Heart right ventricle (tissue), 16 donors: ENCODE measurements at regions of chr11 and their contacts with region 1.

Region 1: GRCh38 chr11:36564376-36565030 is 3.3 kb upstream of the RAG1 start:
- DNase-seq: peak in 1 of 2 donors; percentile 49
- ATAC-seq: peak; percentile 55 to 86 (median 75)
- H3K4me3 ChIP-seq: peak overlapping the region in 9 of 10 donors; percentile 22 to 46 (median 41)
- H3K27ac ChIP-seq: no peak overlapping the region
- H3K4me1 ChIP-seq: peaks cover 0 to 5% (median 0%) of the 10 kb centered on the region in 9 donors
- H3K27me3 ChIP-seq: peaks cover 0 to 5% (median 0%) of the 10 kb centered on the region in 7 donors
- CTCF ChIP-seq: peak; percentile 38 to 81 (median 72)

Region 2: DNA sequence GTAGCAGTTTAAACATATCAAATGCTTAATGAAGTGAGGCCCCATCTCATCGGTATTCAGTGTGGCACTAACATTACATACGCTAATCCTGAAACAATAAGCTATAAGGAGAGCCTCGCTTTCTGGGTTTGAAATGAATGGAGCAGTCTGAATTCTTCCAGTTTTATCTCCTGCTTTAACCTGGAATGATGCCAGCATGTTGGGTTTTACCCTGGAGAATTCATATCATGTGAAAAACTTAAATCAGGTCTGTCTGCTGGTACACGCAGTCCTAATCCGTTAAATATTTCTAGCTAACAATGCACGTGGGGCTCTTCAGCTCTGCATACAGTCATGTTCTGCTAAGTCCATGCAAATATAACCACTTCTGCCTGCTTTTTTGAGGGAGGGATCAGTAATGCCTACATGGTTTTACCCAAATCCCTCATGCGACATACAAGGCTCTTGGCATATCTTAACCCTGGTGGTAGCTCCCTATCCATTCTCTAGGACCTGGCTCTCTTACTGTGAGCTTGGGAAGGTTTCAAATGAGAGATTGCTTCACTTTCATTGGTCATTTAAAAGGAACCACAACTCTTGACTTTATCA is 368.0 kb before region 1 on chr11:
- intact Hi-C with region 1: no loop called
- DNase-seq: peak in 1 of 2 donors; percentile 7
- ATAC-seq: peak in 5 of 8 donors; percentile 46 to 85 (median 67)
- H3K4me3 ChIP-seq: peak overlapping the region in 2 of 10 donors; percentile 4 to 5
- H3K27ac ChIP-seq: peak overlapping the region in 4 of 10 donors; percentile 20 to 48 (median 36)
- H3K4me1 ChIP-seq: peaks cover 0 to 26% (median 7%) of the 10 kb centered on the region in 9 donors
- H3K27me3 ChIP-seq: no peaks in the 10 kb centered on the region
- CTCF ChIP-seq: no peak

Region 3: DNA sequence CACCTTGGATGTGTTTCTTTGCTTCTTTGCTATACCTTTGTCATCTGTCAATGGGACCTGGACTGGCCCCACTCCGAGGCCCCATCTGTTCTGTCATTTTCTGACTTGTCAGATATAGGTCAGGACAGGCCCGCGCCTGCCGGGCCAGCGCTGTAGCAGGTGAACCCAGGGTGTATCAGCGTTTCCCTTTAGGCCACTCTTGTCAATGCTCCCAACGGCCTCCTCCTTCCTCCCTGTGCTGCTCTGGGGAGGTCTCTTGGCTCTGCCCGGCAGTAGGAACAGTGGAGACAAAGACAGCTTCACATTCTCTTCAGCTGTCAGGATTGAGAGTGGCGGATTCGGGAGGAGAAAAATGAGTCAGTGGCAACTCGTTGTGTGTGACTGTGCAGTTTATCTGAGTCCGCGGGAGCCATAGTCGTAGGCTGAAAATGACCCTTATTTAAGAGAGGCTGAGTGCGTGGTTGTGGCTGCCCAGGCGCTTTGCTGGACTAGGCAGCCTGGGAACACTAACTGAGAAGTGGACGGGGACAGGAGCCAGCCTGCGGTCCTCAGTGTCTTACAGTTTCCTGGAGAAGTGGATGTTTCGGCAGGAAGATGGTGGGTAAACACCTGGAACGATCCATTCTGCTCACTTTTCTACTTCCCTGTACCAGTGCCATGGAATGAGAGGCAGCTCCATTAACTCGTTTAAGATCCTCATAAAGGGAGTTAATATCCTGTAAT is 166.1 kb before region 1 on chr11:
- intact Hi-C with region 1: no loop called
- DNase-seq: no peak
- ATAC-seq: no peak
- H3K4me3 ChIP-seq: no peak overlapping the region
- H3K27ac ChIP-seq: peak overlapping the region in 1 of 10 donors; percentile 10
- H3K4me1 ChIP-seq: peaks cover 0 to 33% (median 13%) of the 10 kb centered on the region in 9 donors
- H3K27me3 ChIP-seq: no peaks in the 10 kb centered on the region
- CTCF ChIP-seq: no peak

Region 4: GRCh38 chr11:36417154-36417553 is 147.3 kb before region 1 on chr11:
- intact Hi-C with region 1: no loop called
- DNase-seq: no peak
- ATAC-seq: no peak
- H3K4me3 ChIP-seq: no peak overlapping the region
- H3K27ac ChIP-seq: no peak overlapping the region
- H3K4me1 ChIP-seq: peaks cover 0 to 54% (median 11%) of the 10 kb centered on the region in 9 donors
- H3K27me3 ChIP-seq: no peaks in the 10 kb centered on the region
- CTCF ChIP-seq: no peak

Region 5: DNA sequence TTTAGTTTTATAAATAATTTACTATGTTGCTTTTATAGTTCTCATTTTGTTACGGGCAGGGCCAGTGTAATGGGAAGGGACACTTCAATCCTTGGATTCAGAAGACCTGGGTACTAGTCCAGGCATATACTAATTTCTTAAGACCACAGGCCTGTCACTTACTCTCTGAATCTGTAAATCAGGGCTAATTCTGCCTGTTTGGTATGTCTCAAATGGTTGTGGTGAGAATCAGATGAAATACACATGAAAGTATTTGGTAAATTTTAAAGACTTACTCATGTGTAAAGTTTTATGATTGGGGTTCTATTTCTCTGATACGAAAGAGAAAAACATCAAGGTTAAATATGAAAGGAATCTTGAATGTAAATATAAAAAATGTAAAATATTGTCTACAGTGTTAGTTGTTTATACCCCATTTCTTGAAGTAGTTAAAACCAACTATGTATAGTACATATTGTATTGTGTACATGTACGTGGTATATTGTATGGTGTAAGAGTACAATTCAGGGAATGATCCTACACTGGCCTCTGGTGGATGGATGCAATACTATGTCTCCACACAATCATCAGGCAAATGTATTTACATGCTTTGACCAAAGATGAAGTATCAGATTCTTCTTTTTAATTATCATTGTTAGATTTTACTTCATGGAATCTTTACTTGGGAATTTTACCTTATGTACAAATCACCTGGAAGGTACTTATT is 58.1 kb after region 1 on chr11:
- intact Hi-C with region 1: loop called in 7 of 10 experiments (anchors 1 to 10 kb)
- DNase-seq: no peak
- ATAC-seq: peak in 3 of 8 donors; percentile 53 to 69 (median 65)
- H3K4me3 ChIP-seq: no peak overlapping the region
- H3K27ac ChIP-seq: no peak overlapping the region
- H3K4me1 ChIP-seq: peaks cover 0 to 26% (median 16%) of the 10 kb centered on the region in 9 donors
- H3K27me3 ChIP-seq: no peaks in the 10 kb centered on the region
- CTCF ChIP-seq: peak in 7 of 9 donors; percentile 40 to 67 (median 57)

Region 6: GRCh38 chr11:36672813-36673450 is 108.4 kb after region 1 on chr11:
- intact Hi-C with region 1: loop called (anchors 1 to 5 kb)
- DNase-seq: peak in 1 of 2 donors; percentile 35
- ATAC-seq: no peak
- H3K4me3 ChIP-seq: no peak overlapping the region
- H3K27ac ChIP-seq: no peak overlapping the region
- H3K4me1 ChIP-seq: no peaks in the 10 kb centered on the region
- H3K27me3 ChIP-seq: no peaks in the 10 kb centered on the region
- CTCF ChIP-seq: peak; percentile 62 to 92 (median 85)

Region 7: DNA sequence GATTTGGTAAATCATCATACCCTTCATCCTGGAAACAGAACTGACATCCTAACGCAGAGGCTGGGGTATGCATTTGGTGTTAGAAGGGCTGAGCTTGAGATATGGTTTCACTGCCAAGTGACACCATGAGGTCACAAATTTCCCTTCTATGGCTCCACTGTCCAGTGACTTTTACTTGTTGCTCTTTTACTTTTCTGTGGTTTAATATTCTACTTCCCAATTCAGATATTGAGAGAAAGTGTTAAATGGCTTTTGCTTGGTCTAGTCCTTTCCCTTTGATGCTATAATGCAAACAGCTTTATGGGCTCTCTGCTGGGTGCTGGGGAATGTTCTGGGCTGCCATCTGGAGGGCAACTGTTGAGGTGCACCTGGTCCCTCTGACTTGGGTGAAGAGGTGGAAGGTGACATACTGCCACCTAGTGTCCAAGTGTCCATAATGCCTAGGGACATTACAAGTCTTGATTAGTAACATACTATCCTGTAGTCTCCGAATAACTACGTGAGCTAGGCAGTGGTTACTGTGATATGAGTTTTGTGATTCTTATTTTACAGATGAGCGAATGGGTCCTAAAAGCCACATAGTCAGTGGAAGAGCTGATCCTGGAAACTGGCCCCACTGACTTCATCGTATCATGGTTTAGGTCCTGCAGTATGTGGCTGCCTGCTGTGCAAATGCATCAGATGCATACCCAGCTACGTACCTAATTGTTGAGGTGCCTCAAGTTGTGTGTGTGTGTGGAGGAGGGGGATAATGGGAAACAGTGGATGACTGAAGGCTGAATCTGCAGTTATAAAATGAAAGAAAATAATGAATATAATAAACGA is 182.6 kb after region 1 on chr11:
- intact Hi-C with region 1: loop called in 9 of 10 experiments (anchors 1 to 10 kb)
- DNase-seq: peak; percentile 61 to 87
- ATAC-seq: peak; percentile 89 to 97 (median 94)
- H3K4me3 ChIP-seq: no peak overlapping the region
- H3K27ac ChIP-seq: no peak overlapping the region
- H3K4me1 ChIP-seq: peaks cover 0 to 7% (median 0%) of the 10 kb centered on the region in 9 donors
- H3K27me3 ChIP-seq: peaks cover 0 to 32% (median 4%) of the 10 kb centered on the region in 7 donors
- CTCF ChIP-seq: peak; percentile 80 to 99 (median 98)